ENCODE measurements at regions of chr2 and their contacts with region 1.

Region 1: GRCh38 chr2:141187068-141187439 is 943.8 kb downstream of the LRP1B start:
- DNase-seq: no peak
- H3K4me3 ChIP-seq: no peak overlapping the region
- H3K27ac ChIP-seq: no peak overlapping the region
- H3K4me1 ChIP-seq: no peaks in the 10 kb centered on the region
- H3K27me3 ChIP-seq: no peaks in the 10 kb centered on the region
- CTCF ChIP-seq: no peak

Region 2: DNA sequence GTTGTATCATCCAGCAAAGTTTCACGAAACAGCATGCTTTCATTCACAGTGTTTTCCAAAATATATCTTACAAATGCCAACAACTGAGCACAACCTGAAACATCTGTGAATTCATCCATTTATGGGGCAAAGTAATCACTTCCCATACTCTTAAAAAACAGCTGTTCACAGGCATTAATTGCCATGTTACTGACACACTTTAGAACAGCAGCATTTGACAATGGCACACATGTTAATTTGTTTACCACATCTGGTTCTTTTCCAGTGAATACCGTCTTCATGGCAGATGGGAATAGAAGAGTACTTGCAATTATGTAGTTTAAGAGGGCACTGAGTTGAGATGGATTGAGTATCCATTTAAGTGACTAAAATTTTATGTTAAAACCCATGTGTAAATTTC is 1291.2 kb after region 1 on chr2:
- intact Hi-C with region 1: loop called (anchors 5 kb)
- DNase-seq: no peak
- H3K4me3 ChIP-seq: no peak overlapping the region
- H3K27ac ChIP-seq: no peak overlapping the region
- H3K4me1 ChIP-seq: no peaks in the 10 kb centered on the region
- H3K27me3 ChIP-seq: no peaks in the 10 kb centered on the region
- CTCF ChIP-seq: no peak

Measured in tibial artery (tissue), 4 donors.